ENCODE measurements at regions of chr15 and their contacts with region 1.

Region 1: GRCh38 chr15:67880651-67881182 is 40.9 kb upstream of the RNU6-1 start:
- DNase-seq: no peak
- ATAC-seq: no peak; the same call in 2 of the 3 replicates
- H3K4me3 ChIP-seq: no peak overlapping the region
- H3K27ac ChIP-seq: no peak overlapping the region
- H3K4me1 ChIP-seq: peaks cover 9% of the 10 kb centered on the region
- H3K27me3 ChIP-seq: no peaks in the 10 kb centered on the region
- CTCF ChIP-seq: no peak
- EP300 ChIP-seq: no peak
- POLR2A ChIP-seq: no peak
- RAD21 ChIP-seq: no peak

Region 2: DNA sequence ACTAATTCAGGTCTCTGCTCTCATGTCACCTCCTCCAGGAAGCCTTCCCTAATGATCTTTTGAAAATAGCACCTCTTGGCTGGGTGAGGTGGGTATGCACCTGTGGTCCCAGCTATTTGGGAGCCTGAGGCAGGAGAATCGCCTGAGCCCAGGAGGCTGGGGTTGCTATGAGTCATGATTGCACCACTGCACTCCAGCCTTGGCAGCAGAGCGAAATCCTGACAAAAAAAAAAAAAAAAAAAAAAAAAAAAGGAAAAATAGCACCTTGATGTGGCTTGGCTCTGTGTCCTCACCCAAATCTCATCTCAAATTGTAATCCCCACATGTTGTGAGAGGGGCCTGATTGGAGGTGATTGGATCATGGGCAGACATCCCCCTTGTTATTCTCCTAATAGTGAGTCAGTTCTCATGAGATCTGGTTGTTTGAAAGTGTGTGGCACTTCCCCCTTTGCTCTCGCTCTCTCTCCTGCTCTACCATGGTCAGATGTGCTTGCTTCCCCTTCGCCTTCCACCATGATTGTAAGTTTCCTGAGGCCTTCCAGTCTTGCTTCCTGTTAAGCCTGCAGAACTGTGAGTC is 29.6 kb before region 1 on chr15:
- CTCF ChIA-PET with region 1: no interaction called
- POLR2A ChIA-PET with region 1: interaction called, 11 read pairs
- RAD21 ChIA-PET with region 1: interaction called, 3 read pairs
- SMC1A ChIA-PET with region 1: no interaction called
- in situ Hi-C with region 1: no loop called
- intact Hi-C with region 1: no loop called
- DNase-seq: peak; percentile 52
- ATAC-seq: peak; percentile 59
- H3K4me3 ChIP-seq: no peak overlapping the region
- H3K27ac ChIP-seq: peak overlapping the region; percentile 11; the same call in 1 of the 2 replicates
- H3K4me1 ChIP-seq: peaks cover 30% of the 10 kb centered on the region
- H3K27me3 ChIP-seq: no peaks in the 10 kb centered on the region
- CTCF ChIP-seq: no peak
- EP300 ChIP-seq: no peak
- POLR2A ChIP-seq: no peak
- RAD21 ChIP-seq: no peak

Region 3: DNA sequence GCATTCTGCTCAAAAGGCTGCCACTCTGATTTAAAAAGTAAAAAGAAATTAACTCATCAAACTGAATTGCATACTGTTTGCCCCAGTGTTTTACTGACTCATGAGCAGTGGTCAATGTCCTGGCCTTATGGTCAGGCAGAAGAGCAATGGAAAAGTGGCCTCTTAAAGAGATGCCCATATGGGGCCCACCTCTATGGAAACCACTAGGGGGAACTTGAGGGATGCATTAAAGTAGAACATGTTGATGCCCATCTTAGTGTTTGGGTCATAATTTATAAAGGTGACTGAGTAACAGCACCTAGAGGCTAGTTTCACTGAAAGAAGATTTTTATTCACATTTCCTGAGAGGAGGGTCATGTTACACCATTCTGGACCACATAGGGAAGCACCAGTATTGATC is 25.7 kb after region 1 on chr15:
- CTCF ChIA-PET with region 1: no interaction called
- POLR2A ChIA-PET with region 1: no interaction called
- RAD21 ChIA-PET with region 1: no interaction called
- SMC1A ChIA-PET with region 1: interaction called, 10 read pairs
- in situ Hi-C with region 1: no loop called
- intact Hi-C with region 1: no loop called
- DNase-seq: no peak
- ATAC-seq: no peak
- H3K4me3 ChIP-seq: no peak overlapping the region
- H3K27ac ChIP-seq: no peak overlapping the region
- H3K4me1 ChIP-seq: peaks cover 25% of the 10 kb centered on the region
- H3K27me3 ChIP-seq: no peaks in the 10 kb centered on the region
- CTCF ChIP-seq: peak; percentile 6 to 32 (median 10); a peak in 1 of 6 replicates
- EP300 ChIP-seq: no peak
- POLR2A ChIP-seq: no peak
- RAD21 ChIP-seq: peak; percentile 22; the same call in 1 of the 2 replicates

Region 4: GRCh38 chr15:67927501-67928168 is 46.9 kb after region 1 on chr15:
- CTCF ChIA-PET with region 1: no interaction called
- POLR2A ChIA-PET with region 1: interaction called, 12 read pairs
- RAD21 ChIA-PET with region 1: no interaction called
- SMC1A ChIA-PET with region 1: no interaction called
- in situ Hi-C with region 1: no loop called
- intact Hi-C with region 1: no loop called
- DNase-seq: no peak
- ATAC-seq: no peak
- H3K4me3 ChIP-seq: no peak overlapping the region
- H3K27ac ChIP-seq: no peak overlapping the region
- H3K4me1 ChIP-seq: no peaks in the 10 kb centered on the region
- H3K27me3 ChIP-seq: no peaks in the 10 kb centered on the region
- CTCF ChIP-seq: no peak
- EP300 ChIP-seq: no peak
- POLR2A ChIP-seq: no peak
- RAD21 ChIP-seq: no peak

Region 5: GRCh38 chr15:68399096-68400065 is 518.7 kb after region 1 on chr15:
- CTCF ChIA-PET with region 1: no interaction called
- POLR2A ChIA-PET with region 1: no interaction called
- RAD21 ChIA-PET with region 1: no interaction called
- SMC1A ChIA-PET with region 1: no interaction called
- in situ Hi-C with region 1: no loop called
- intact Hi-C with region 1: no loop called
- DNase-seq: no peak
- ATAC-seq: no peak
- H3K4me3 ChIP-seq: no peak overlapping the region
- H3K27ac ChIP-seq: no peak overlapping the region
- H3K4me1 ChIP-seq: no peaks in the 10 kb centered on the region
- H3K27me3 ChIP-seq: no peaks in the 10 kb centered on the region
- CTCF ChIP-seq: no peak
- EP300 ChIP-seq: no peak
- POLR2A ChIP-seq: no peak
- RAD21 ChIP-seq: no peak

Measured in GM12878 (cell line).